Common myeloid progenitor, CD34-positive (primary cell): ENCODE measurements at regions of chr4 and their contacts with region 1.

Region 1: GRCh38 chr4:26885912-26886274 is 25.3 kb downstream of the STIM2 start:
- DNase-seq: peak; percentile 91 to 98 (median 96)
- H3K4me3 ChIP-seq: peak overlapping the region in 6 of 7 experiments; percentile 6 to 59 (median 46)
- H3K27ac ChIP-seq: peak overlapping the region in 1 of 2 experiments; percentile 25
- H3K4me1 ChIP-seq: peaks cover 17 to 39% (median 31%) of the 10 kb centered on the region in 4 experiments
- H3K27me3 ChIP-seq: no peaks in the 10 kb centered on the region

Region 2: DNA sequence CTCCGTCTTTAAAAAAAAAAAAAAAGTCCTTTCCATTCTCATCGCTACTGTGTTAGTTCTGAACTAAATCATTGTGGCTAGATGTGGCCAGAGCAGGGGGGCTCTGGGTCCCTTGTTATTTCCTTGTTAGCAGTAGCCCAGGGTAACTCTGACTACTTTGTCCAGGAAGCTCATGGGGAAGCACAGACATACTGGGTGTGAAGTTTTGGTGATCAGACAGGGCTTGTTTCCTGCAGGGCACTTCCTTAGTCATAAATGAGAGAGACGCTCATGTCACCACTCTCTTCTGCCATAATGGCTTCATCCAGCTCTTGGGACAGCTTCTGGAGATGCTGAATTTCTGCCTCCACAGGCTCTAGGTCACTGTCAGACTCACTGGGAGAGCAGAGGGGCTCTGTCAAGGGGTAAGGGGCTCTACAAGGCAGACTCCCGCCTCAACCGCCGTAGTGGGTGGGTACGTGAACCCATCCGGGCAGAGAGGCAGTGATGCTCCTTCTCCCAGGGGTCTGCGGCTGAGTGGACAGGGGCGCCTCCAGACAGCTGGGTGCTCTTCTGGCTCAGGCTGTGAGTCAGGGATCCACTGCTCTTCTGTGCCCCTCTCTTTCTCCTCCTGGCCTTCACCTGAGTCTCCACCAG is 12.4 kb before region 1 on chr4:
- CTCF ChIA-PET with region 1: interaction called, 14 read pairs
- POLR2A ChIA-PET with region 1: interaction called, 4 read pairs
- DNase-seq: peak; percentile 83 to 98 (median 96)
- H3K4me3 ChIP-seq: no peak overlapping the region
- H3K27ac ChIP-seq: no peak overlapping the region
- H3K4me1 ChIP-seq: peaks cover 0 to 18% (median 13%) of the 10 kb centered on the region in 4 experiments
- H3K27me3 ChIP-seq: no peaks in the 10 kb centered on the region